MCF 10A (cell line): ENCODE measurements at regions of chr16 and their contacts with region 1.

Region 1: GRCh38 chr16:83215406-83216001 is 588.7 kb downstream of the CDH13 start:
- DNase-seq: peak; percentile 59
- H3K4me3 Mint-ChIP-seq: no peak overlapping the region
- H3K27ac Mint-ChIP-seq: no peak overlapping the region
- H3K4me1 Mint-ChIP-seq: no peaks in the 10 kb centered on the region
- H3K27me3 Mint-ChIP-seq: no peaks in the 10 kb centered on the region
- CTCF ChIP-seq: peak; percentile 87

Region 2: DNA sequence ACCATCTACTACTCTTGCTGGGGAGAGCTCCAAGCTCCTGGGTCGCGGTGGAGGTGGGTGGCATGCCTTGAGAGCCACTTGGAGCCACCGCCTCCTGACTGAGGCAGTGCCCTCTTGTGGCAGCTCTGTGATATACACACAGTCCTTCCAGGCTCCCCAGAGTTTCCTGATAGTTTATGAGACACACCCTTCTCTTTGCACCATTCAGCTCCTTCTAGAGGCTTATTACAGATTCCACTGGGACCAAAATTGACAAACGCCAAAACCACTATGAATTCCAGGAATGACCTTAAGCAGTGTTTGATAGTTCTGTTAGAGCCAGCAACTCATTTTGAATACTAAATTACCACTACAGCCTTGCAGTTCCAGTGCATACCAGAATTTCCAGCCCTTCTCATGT is 758.8 kb before region 1 on chr16:
- CTCF ChIA-PET with region 1: interaction called, 3 read pairs
- POLR2A ChIA-PET with region 1: no interaction called
- intact Hi-C with region 1: loop called (anchors 5 kb)
- DNase-seq: peak; percentile 74
- H3K4me3 Mint-ChIP-seq: no peak overlapping the region
- H3K27ac Mint-ChIP-seq: no peak overlapping the region
- H3K4me1 Mint-ChIP-seq: peaks cover 17% of the 10 kb centered on the region
- H3K27me3 Mint-ChIP-seq: peaks cover 82% of the 10 kb centered on the region
- CTCF ChIP-seq: peak; percentile 70

Region 3: DNA sequence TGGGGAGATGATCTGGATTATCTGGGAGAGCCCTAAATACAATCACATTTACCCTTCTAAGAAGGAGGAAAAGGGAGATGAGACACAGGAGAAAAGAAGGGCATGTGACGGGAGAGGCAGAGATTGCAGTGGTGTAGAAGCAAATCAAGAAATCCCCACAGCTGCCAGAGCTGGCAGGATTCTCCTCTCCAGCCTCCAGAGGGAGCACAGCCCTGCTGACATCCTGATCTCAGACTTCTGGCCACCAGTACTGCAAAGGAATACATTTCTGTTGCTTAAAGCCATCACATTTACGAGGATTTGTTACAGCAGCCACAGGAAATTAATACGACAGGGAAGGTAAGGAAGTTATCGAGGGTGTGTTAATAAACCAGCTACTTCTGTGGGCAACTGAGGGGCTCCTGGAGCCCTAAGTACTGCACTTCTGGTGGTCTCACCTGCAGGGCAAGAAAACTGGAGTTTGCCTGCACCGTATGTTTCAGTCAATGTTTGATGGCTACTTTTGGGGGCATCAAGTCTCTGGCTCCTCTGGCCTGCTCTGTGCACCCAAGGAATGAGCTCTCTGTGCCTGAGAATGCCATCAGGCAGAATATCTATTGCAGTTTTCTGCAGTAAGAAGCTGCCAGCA is 611.6 kb before region 1 on chr16:
- CTCF ChIA-PET with region 1: interaction called, 8 read pairs
- POLR2A ChIA-PET with region 1: no interaction called
- intact Hi-C with region 1: loop called (anchors 1 kb)
- DNase-seq: peak; percentile 64
- H3K4me3 Mint-ChIP-seq: no peak overlapping the region
- H3K27ac Mint-ChIP-seq: no peak overlapping the region
- H3K4me1 Mint-ChIP-seq: no peaks in the 10 kb centered on the region
- H3K27me3 Mint-ChIP-seq: no peaks in the 10 kb centered on the region
- CTCF ChIP-seq: peak; percentile 59

Region 4: GRCh38 chr16:82639666-82640336 is 575.7 kb before region 1 on chr16:
- CTCF ChIA-PET with region 1: interaction called, 52 read pairs
- POLR2A ChIA-PET with region 1: no interaction called
- intact Hi-C with region 1: loop called (anchors 1 kb)
- DNase-seq: peak; percentile 73
- H3K4me3 Mint-ChIP-seq: no peak overlapping the region
- H3K27ac Mint-ChIP-seq: no peak overlapping the region
- H3K4me1 Mint-ChIP-seq: peaks cover 36% of the 10 kb centered on the region
- H3K27me3 Mint-ChIP-seq: no peaks in the 10 kb centered on the region
- CTCF ChIP-seq: peak; percentile 82

Region 5: GRCh38 chr16:83233153-83233552 is 17.6 kb after region 1 on chr16:
- CTCF ChIA-PET with region 1: interaction called, 10 read pairs
- POLR2A ChIA-PET with region 1: no interaction called
- intact Hi-C with region 1: no loop called
- DNase-seq: no peak
- H3K4me3 Mint-ChIP-seq: no peak overlapping the region
- H3K27ac Mint-ChIP-seq: no peak overlapping the region
- H3K4me1 Mint-ChIP-seq: no peaks in the 10 kb centered on the region
- H3K27me3 Mint-ChIP-seq: no peaks in the 10 kb centered on the region
- CTCF ChIP-seq: no peak

Region 6: GRCh38 chr16:83356266-83356665 is 140.8 kb after region 1 on chr16:
- CTCF ChIA-PET with region 1: no interaction called
- POLR2A ChIA-PET with region 1: no interaction called
- intact Hi-C with region 1: loop called (anchors 5 kb)
- DNase-seq: peak; percentile 77
- H3K4me3 Mint-ChIP-seq: no peak overlapping the region
- H3K27ac Mint-ChIP-seq: no peak overlapping the region
- H3K4me1 Mint-ChIP-seq: no peaks in the 10 kb centered on the region
- H3K27me3 Mint-ChIP-seq: no peaks in the 10 kb centered on the region
- CTCF ChIP-seq: peak; percentile 43

Region 7: DNA sequence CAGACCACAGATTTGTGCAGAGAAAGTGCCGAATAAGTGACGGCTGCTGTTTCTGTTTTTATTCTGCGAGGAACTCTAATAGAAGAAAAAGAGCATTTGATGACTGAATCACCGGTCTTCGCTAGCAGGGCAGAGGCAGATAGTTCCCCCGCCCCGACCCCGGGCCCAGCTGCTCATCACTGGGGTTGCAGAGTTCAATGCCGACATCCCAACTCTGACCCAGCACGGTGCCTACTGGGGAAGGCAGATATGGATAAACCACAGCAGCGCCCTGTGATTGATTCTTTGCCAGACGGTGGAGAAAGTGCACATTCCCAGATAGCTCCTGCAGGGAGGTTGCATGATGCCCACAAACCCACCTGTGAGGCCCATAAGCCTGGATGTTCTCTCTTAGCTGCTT is 234.4 kb after region 1 on chr16:
- CTCF ChIA-PET with region 1: interaction called, 29 read pairs
- POLR2A ChIA-PET with region 1: no interaction called
- intact Hi-C with region 1: no loop called
- DNase-seq: no peak
- H3K4me3 Mint-ChIP-seq: no peak overlapping the region
- H3K27ac Mint-ChIP-seq: no peak overlapping the region
- H3K4me1 Mint-ChIP-seq: peaks cover 13% of the 10 kb centered on the region
- H3K27me3 Mint-ChIP-seq: no peaks in the 10 kb centered on the region
- CTCF ChIP-seq: no peak

Region 8: GRCh38 chr16:83482545-83483162 is 267.1 kb after region 1 on chr16:
- CTCF ChIA-PET with region 1: no interaction called
- POLR2A ChIA-PET with region 1: no interaction called
- intact Hi-C with region 1: no loop called
- DNase-seq: no peak
- H3K4me3 Mint-ChIP-seq: no peak overlapping the region
- H3K27ac Mint-ChIP-seq: no peak overlapping the region
- H3K4me1 Mint-ChIP-seq: no peaks in the 10 kb centered on the region
- H3K27me3 Mint-ChIP-seq: no peaks in the 10 kb centered on the region
- CTCF ChIP-seq: no peak